OCI-LY7 (cell line): ENCODE measurements at regions of chr6 and their contacts with region 1.

Region 1: GRCh38 chr6:88177961-88178464 is 11.9 kb upstream of the CNR1 start:
- DNase-seq: peak; percentile 91
- H3K4me3 ChIP-seq: peak overlapping the region; percentile 74
- H3K27ac ChIP-seq: peak overlapping the region; percentile 93
- H3K4me1 ChIP-seq: peaks cover 68% of the 10 kb centered on the region
- CTCF ChIP-seq: no peak

Region 2: GRCh38 chr6:87154993-87155841 is 1022.8 kb before region 1 on chr6 and contains the start of gene ZNF292:
- CTCF ChIA-PET with region 1: no interaction called
- POLR2A ChIA-PET with region 1: no interaction called
- intact Hi-C with region 1: loop called (anchors 10 kb)
- DNase-seq: peak; percentile 99
- H3K4me3 ChIP-seq: peak within 1 kb of the TSS; percentile 81
- H3K27ac ChIP-seq: peak within 1 kb of the TSS; percentile 83
- H3K4me1 ChIP-seq: peaks cover 37% of the 10 kb centered on the region
- CTCF ChIP-seq: 0 out of 2 replicates have a peak, but pooled peaks have one; percentile 27
- total RNA-seq, gene ZNF292: 17.5 and 18.7 TPM in 2 replicates

Region 3: DNA sequence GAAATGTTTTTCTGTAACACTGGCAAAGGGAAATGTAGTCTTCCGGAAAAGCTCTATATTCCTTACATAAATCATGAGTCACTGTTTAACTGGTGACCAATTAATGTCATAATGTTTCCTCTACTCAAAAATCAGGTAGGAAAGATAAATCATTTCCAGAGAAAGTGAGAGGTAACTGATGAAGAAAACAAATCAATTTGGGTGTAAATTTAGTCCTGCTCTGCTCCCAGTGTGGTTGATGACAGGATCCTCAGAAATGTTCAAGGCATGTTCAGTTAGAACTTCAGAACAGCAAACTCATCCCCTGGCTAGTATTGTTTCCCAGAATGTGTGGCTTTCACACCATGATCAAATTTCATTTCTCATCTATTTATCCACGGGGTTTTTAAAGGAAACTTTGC is 169.2 kb before region 1 on chr6:
- CTCF ChIA-PET with region 1: no interaction called
- POLR2A ChIA-PET with region 1: no interaction called
- intact Hi-C with region 1: no loop called
- DNase-seq: no peak
- H3K4me3 ChIP-seq: no peak overlapping the region
- H3K27ac ChIP-seq: no peak overlapping the region
- H3K4me1 ChIP-seq: peaks cover 23% of the 10 kb centered on the region
- CTCF ChIP-seq: no peak

Region 4: DNA sequence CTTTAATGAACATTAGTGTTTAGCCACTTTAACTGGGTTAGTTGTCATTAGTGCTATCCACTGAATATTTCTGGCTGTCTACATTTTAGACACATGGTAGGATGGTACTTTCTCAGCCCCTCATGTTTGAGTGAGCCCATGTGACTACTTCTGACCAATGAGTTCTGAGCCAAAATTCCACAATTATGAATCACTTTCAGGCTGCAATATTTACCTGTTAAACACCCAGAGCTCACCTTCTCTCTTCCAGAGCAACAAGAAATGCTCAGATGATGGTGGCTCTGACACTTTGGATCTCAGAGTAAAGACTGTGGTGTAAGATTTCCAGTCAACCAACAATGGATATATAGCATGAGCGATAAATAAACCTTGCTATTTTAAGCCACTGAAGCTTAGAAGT is 105.6 kb before region 1 on chr6:
- CTCF ChIA-PET with region 1: no interaction called
- POLR2A ChIA-PET with region 1: no interaction called
- intact Hi-C with region 1: no loop called
- DNase-seq: no peak
- H3K4me3 ChIP-seq: no peak overlapping the region
- H3K27ac ChIP-seq: no peak overlapping the region
- H3K4me1 ChIP-seq: peaks cover 6% of the 10 kb centered on the region
- CTCF ChIP-seq: no peak

Region 5: DNA sequence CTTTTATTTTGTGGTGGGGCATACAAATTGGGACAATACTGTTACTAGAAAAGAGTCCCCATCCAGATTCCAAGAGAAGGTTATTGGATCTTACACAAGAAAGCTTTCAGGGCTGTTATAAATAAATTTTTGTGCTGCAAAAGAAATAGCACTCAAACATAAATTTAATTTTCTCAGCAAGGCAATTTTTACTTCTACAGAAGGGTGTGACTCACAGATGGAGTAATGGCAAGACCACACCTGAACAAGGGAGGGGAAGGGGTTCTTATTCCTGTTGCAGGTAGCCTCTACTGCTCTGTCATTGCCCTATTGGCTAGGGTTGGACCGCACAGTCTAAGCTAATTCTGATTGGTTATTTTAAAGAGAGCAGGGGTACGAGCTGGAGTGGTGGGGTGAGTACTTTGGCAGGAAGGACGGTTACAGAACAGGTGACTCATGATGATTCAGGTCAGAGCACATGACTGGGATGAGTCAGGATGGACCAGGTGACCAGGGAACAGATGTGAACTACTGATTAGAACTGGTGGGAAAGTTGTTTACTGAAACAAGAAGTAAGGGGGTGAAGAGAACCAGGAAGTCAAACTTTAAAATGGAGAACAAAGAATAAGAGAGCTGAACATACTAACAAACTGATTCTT is 53.0 kb before region 1 on chr6:
- CTCF ChIA-PET with region 1: no interaction called
- POLR2A ChIA-PET with region 1: no interaction called
- intact Hi-C with region 1: no loop called
- DNase-seq: no peak
- H3K4me3 ChIP-seq: no peak overlapping the region
- H3K27ac ChIP-seq: no peak overlapping the region
- H3K4me1 ChIP-seq: no peaks in the 10 kb centered on the region
- CTCF ChIP-seq: no peak

Region 6: GRCh38 chr6:88141561-88142296 is 36.3 kb before region 1 on chr6:
- CTCF ChIA-PET with region 1: no interaction called
- POLR2A ChIA-PET with region 1: interaction called, 4 read pairs
- intact Hi-C with region 1: loop called (anchors 2 kb)
- DNase-seq: peak; percentile 95
- H3K4me3 ChIP-seq: peak overlapping the region; percentile 49
- H3K27ac ChIP-seq: peak overlapping the region; percentile 89
- H3K4me1 ChIP-seq: peaks cover 58% of the 10 kb centered on the region
- CTCF ChIP-seq: no peak; the same call in 1 of the 2 replicates

Region 7: GRCh38 chr6:88238065-88238464 is 60.1 kb after region 1 on chr6:
- CTCF ChIA-PET with region 1: no interaction called
- POLR2A ChIA-PET with region 1: interaction called, 3 read pairs
- intact Hi-C with region 1: loop called (anchors 5 kb)
- DNase-seq: peak; percentile 74
- H3K4me3 ChIP-seq: no peak overlapping the region
- H3K27ac ChIP-seq: no peak overlapping the region
- H3K4me1 ChIP-seq: peaks cover 17% of the 10 kb centered on the region
- CTCF ChIP-seq: peak; percentile 88

Region 8: GRCh38 chr6:88472851-88473525 is 295.0 kb after region 1 on chr6:
- CTCF ChIA-PET with region 1: no interaction called
- POLR2A ChIA-PET with region 1: no interaction called
- intact Hi-C with region 1: no loop called
- DNase-seq: no peak
- H3K4me3 ChIP-seq: no peak overlapping the region
- H3K27ac ChIP-seq: no peak overlapping the region
- H3K4me1 ChIP-seq: no peaks in the 10 kb centered on the region
- CTCF ChIP-seq: no peak